Right lobe of liver (tissue), 6 donors: ENCODE measurements at regions of chr2 and their contacts with region 1.

Region 1: DNA sequence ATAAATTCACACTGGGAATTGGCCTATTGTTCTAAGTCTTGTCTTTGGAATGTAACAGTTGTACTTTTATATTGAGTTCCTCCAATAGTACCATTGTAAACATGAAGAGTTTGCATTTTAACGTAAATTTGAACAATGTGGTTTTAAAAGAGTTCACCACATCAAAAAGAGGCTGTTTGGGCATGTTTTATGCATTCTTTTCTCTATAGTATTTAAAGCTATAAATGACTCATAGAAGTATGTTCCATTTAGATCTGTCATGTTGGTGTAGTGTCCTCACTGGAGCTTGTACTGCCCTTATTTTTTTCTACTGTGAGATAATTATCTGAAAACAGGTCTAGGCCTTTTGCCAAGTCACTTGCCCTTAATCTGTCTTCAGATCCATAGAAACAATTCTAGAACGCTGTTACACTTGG is 141.9 kb downstream of the RHBDD1 start:
- DNase-seq: no peak
- ATAC-seq: no peak
- H3K4me3 ChIP-seq: no peak overlapping the region
- H3K27ac ChIP-seq: no peak overlapping the region
- H3K4me1 ChIP-seq: no peaks in the 10 kb centered on the region
- H3K27me3 ChIP-seq: no peaks in the 10 kb centered on the region
- CTCF ChIP-seq: no peak
- POLR2A ChIP-seq: no peak

Region 2: DNA sequence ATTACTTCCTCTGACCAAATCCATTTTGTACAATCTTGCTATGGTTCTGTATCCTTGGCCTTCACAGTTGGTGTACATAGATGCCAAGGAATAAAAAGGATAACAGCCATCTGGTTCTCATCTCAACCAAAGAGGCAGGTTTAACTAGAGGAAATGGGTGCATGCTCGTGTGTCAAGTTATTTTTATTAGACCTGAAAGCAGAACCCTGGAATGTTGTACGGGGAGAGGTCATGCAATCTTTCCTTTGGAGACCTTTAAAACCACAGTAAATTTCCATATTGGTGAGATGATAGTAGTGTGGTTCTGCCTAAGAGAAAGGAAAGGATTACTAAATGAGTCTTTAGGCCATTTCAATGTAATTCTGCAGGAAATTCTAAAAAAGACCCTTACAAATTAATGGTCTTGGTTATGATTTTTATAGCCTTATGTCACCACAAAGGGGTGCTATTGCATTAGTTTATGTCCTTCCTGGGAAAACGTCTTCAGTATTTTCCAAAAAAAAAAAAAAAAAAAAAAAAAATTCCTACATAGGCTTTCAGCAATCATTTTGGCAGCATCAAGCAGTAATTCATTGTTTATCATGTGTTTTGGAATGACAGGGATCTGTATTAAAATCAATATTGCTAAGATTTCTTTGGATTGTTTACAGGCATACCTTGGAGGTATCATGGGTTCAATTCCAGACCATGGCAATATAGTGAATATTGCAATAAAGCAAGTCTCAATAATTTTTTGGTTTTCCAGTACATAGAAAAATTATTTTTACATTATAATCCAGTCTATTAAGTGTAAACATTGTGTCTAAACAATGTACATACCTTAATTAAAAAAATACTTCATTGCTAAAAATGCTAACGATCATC is 1307.4 kb before region 1 on chr2:
- intact Hi-C with region 1: loop called in 1 of 2 experiments (anchors 10 kb)
- DNase-seq: no peak
- ATAC-seq: peak in 1 of 4 donors; percentile 36
- H3K4me3 ChIP-seq: no peak overlapping the region
- H3K27ac ChIP-seq: no peak overlapping the region
- H3K4me1 ChIP-seq: no peaks in the 10 kb centered on the region
- H3K27me3 ChIP-seq: no peaks in the 10 kb centered on the region
- CTCF ChIP-seq: peak; percentile 22 to 49 (median 41)
- POLR2A ChIP-seq: no peak

Region 3: GRCh38 chr2:226813148-226813701 is 164.6 kb before region 1 on chr2:
- intact Hi-C with region 1: loop called in 1 of 2 experiments (anchors 10 kb)
- DNase-seq: no peak
- ATAC-seq: peak in 1 of 4 donors; percentile 53
- H3K4me3 ChIP-seq: no peak overlapping the region
- H3K27ac ChIP-seq: no peak overlapping the region
- H3K4me1 ChIP-seq: no peaks in the 10 kb centered on the region
- H3K27me3 ChIP-seq: no peaks in the 10 kb centered on the region
- CTCF ChIP-seq: peak in 1 of 4 donors; percentile 26
- POLR2A ChIP-seq: no peak

Region 4: DNA sequence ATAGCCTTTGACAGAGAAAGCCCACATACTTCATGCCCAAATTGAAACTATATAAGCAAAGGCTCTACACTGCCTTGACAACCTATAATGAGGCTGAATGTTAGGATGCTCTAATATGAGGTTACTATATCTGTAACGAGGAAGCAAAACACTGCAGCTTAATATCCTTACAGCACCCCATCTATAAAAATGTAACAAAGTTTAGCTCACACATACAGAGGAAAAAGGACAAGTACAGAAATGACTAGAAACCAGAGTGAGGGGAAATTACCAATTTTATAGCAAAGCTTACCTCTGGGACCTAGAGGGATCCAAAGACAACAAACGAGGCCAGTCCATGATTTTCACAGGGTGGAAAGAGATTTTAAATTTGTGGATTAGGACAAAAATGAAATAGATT is 47.7 kb after region 1 on chr2:
- intact Hi-C with region 1: no loop called
- DNase-seq: no peak
- ATAC-seq: no peak
- H3K4me3 ChIP-seq: no peak overlapping the region
- H3K27ac ChIP-seq: no peak overlapping the region
- H3K4me1 ChIP-seq: no peaks in the 10 kb centered on the region
- H3K27me3 ChIP-seq: no peaks in the 10 kb centered on the region
- CTCF ChIP-seq: no peak
- POLR2A ChIP-seq: no peak